T-cell (primary cell): ENCODE measurements at regions of chr2 and their contacts with region 1.

Region 1: GRCh38 chr2:158779621-158780020 is 15.5 kb upstream of the DAPL1 start:
- DNase-seq: no peak
- ATAC-seq: no peak
- H3K4me3 ChIP-seq: no peak overlapping the region
- H3K4me3 Mint-ChIP-seq: no peak overlapping the region
- H3K27ac ChIP-seq: no peak overlapping the region
- H3K27ac Mint-ChIP-seq: no peak overlapping the region
- H3K4me1 ChIP-seq: no peaks in the 10 kb centered on the region
- H3K4me1 Mint-ChIP-seq: no peaks in the 10 kb centered on the region
- H3K27me3 ChIP-seq: no peaks in the 10 kb centered on the region
- H3K27me3 Mint-ChIP-seq: peaks cover 4 to 5% of the 10 kb centered on the region in 2 donors

Region 2: GRCh38 chr2:158518075-158518474 is 261.5 kb before region 1 on chr2:
- CTCF ChIA-PET with region 1: no interaction called
- POLR2A ChIA-PET with region 1: interaction called in 1 of 2 experiments, 10 read pairs
- DNase-seq: no peak
- ATAC-seq: no peak
- H3K4me3 ChIP-seq: no peak overlapping the region
- H3K4me3 Mint-ChIP-seq: no peak overlapping the region
- H3K27ac ChIP-seq: no peak overlapping the region
- H3K27ac Mint-ChIP-seq: no peak overlapping the region
- H3K4me1 ChIP-seq: no peaks in the 10 kb centered on the region
- H3K4me1 Mint-ChIP-seq: peaks cover 0 to 7% (median 0%) of the 10 kb centered on the region in 3 donors
- H3K27me3 ChIP-seq: no peaks in the 10 kb centered on the region
- H3K27me3 Mint-ChIP-seq: no peaks in the 10 kb centered on the region